ENCODE measurements at regions of chr20 and their contacts with region 1.

Region 1: DNA sequence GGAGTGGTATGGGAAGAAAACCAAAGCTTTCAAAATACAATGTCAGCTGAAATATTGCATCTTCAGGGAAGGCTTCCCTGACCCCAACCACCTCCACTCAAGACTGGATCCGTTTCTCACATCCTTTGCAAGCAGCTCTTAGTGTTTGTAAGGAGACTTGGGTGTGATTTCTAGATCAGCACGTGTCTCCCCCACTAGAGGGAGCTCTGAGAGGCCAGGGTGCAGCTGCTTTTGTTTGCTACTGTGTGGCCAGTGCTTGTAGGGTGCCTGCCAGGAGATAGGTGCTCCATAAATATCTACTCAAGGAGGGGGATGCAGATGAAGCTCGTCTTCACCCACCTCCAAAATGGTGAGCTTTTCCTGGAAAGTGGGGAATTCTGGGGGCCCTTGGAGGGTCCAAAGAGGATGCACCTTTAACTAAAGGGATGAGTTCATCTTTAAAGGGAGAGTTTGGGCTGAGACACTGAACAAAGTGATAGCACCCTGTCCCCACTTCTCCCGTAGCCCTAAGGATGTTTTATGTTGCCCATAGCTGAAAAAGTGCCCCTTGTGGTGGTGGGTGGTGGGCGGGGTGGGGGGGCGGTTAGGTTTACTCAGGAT is 52.6 kb upstream of the MAFB start:
- DNase-seq: peak in 17 of 35 experiments; percentile 2 to 59 (median 10)
- ATAC-seq: no peak
- H3K4me3 ChIP-seq: no peak overlapping the region
- H3K4me3 Mint-ChIP-seq: no peak overlapping the region
- H3K27ac ChIP-seq: no peak overlapping the region
- H3K27ac Mint-ChIP-seq: no peak overlapping the region
- H3K4me1 ChIP-seq: no peaks in the 10 kb centered on the region
- H3K4me1 Mint-ChIP-seq: no peaks in the 10 kb centered on the region
- H3K27me3 ChIP-seq: peaks cover 0 to 16% of the 10 kb centered on the region in 2 experiments
- H3K27me3 Mint-ChIP-seq: peaks cover 3 to 6% of the 10 kb centered on the region in 2 donors

Region 2: DNA sequence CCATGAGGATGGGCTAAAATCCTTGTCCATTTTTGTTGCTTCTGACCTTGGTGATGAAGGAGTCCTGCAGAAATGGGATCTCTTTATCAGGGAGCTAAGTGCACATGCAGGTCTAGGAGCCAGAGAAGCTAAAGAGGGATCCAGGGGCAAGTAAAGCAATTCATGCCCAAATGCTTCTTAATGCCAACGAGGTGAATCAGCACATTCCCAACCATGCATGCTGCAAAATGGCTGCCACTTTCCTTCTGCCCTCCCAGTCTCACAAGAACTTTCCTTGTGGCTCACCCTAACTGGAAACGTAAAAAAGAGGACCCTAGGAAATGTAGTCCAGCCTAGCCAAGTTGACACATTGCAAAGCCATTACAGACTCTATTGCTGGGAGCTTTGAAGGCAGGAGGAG is 351.0 kb before region 1 on chr20:
- CTCF ChIA-PET with region 1: no interaction called
- POLR2A ChIA-PET with region 1: no interaction called
- DNase-seq: no peak
- ATAC-seq: no peak
- H3K4me3 ChIP-seq: no peak overlapping the region
- H3K4me3 Mint-ChIP-seq: no peak overlapping the region
- H3K27ac ChIP-seq: no peak overlapping the region
- H3K27ac Mint-ChIP-seq: no peak overlapping the region
- H3K4me1 ChIP-seq: no peaks in the 10 kb centered on the region
- H3K4me1 Mint-ChIP-seq: no peaks in the 10 kb centered on the region
- H3K27me3 ChIP-seq: no peaks in the 10 kb centered on the region
- H3K27me3 Mint-ChIP-seq: peaks cover 2 to 3% of the 10 kb centered on the region in 2 donors

Region 3: DNA sequence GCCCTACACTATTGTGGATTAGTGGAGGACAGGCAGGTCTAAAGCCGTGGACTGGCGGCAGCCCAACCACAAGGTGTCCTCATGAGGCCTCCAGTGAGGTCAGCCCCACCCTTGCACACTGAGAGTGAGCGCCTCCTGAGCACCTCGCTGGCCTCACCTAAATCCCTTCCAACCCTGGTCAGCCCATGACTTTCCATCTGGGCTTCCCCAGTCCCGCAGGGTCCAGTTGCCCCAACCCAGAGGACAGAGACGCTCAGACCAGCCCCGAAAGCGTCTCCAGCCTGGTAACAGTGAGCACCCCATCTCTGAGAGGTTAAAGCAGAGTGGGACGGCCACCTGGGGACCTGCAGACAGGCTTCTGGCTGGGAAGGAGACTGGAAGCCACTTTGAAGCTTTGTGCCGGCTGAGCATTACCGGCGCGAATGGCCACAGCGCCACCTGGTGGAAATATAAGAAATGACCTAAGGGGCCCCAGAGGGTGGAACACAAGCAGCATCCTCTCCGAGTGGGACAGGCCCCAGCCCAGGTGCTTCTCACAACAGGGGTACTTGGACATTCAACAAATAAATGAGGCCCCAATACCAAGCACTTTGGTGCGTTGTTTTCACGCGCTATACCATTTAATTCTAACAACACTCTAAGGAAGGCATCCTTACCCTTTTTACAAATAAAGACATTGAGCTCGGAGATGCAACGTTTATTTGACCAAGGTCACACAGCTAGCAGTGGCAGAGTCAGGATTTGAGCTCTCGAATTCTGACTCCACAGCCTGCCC is 221.3 kb after region 1 on chr20:
- CTCF ChIA-PET with region 1: interaction called, 4 to 12 read pairs
- POLR2A ChIA-PET with region 1: no interaction called
- DNase-seq: peak; percentile 40 to 83 (median 61)
- ATAC-seq: peak; percentile 83 to 91 (median 85)
- H3K4me3 ChIP-seq: no peak overlapping the region
- H3K4me3 Mint-ChIP-seq: no peak overlapping the region
- H3K27ac ChIP-seq: no peak overlapping the region
- H3K27ac Mint-ChIP-seq: peak overlapping the region in 1 of 2 donors; percentile 59
- H3K4me1 ChIP-seq: peaks cover 0 to 18% of the 10 kb centered on the region in 2 experiments
- H3K4me1 Mint-ChIP-seq: peaks cover 0 to 12% (median 11%) of the 10 kb centered on the region in 3 donors
- H3K27me3 ChIP-seq: peaks cover 0 to 6% of the 10 kb centered on the region in 2 experiments
- H3K27me3 Mint-ChIP-seq: no peaks in the 10 kb centered on the region

Region 4: GRCh38 chr20:41261790-41262717 is 520.4 kb after region 1 on chr20:
- CTCF ChIA-PET with region 1: interaction called in 1 of 2 experiments, 13 read pairs
- POLR2A ChIA-PET with region 1: no interaction called
- DNase-seq: no peak
- ATAC-seq: no peak
- H3K4me3 ChIP-seq: no peak overlapping the region
- H3K4me3 Mint-ChIP-seq: no peak overlapping the region
- H3K27ac ChIP-seq: no peak overlapping the region
- H3K27ac Mint-ChIP-seq: no peak overlapping the region
- H3K4me1 ChIP-seq: no peaks in the 10 kb centered on the region
- H3K4me1 Mint-ChIP-seq: no peaks in the 10 kb centered on the region
- H3K27me3 ChIP-seq: no peaks in the 10 kb centered on the region
- H3K27me3 Mint-ChIP-seq: no peaks in the 10 kb centered on the region